HepG2 (cell line): ENCODE measurements at regions of chr6 and their contacts with region 1.

Region 1: GRCh38 chr6:52233975-52234823 is 10.1 kb downstream of the IL17F start:
- DNase-seq: peak; percentile 68
- ATAC-seq: peak; percentile 99
- H3K4me3 ChIP-seq: no peak overlapping the region; a peak in 1 of 6 replicates
- H3K27ac ChIP-seq: no peak overlapping the region
- H3K4me1 ChIP-seq: peaks cover 10% of the 10 kb centered on the region
- H3K27me3 ChIP-seq: peaks cover 0 to 27% of the 10 kb centered on the region in 2 experiments; a peak in 2 of 5 replicates
- CTCF ChIP-seq: peak; percentile 86
- EP300 ChIP-seq: no peak
- POLR2A ChIP-seq: no peak
- RAD21 ChIP-seq: peak; percentile 70; the same call in 1 of the 2 replicates

Region 2: DNA sequence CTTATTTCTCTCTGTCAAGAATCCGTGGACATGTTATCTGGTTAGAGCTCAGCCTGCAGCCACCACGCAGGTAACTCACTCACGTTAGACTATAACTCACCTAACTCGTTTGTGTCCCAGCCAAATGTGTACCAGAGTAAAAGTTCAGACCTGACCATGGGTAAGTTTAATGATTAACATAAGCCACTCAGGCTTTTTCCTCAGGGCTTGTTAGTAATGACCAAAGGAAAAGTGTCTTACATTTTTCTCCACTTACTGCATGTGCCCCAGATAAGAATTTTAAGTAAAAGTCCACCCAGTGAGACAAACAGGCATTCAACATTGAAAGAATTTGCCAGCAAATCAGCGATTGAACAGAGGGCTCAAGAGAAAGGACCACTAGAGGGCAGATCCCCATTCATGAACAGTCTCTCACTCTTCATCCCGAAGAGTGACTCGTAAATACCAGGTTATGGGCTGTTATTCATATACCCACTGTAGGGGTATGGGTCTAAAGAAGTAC is 146.7 kb before region 1 on chr6 and contains the start of gene PKHD1:
- CTCF ChIA-PET with region 1: no interaction called
- POLR2A ChIA-PET with region 1: no interaction called
- in situ Hi-C with region 1: no loop called
- intact Hi-C with region 1: loop called (anchors 2 kb)
- DNase-seq: peak; percentile 55
- ATAC-seq: peak; percentile 96
- H3K4me3 ChIP-seq: peak within 1 kb of the TSS in 1 of 3 experiments; percentile 20; a peak in 1 of 6 replicates
- H3K27ac ChIP-seq: no peak within 1 kb of the TSS
- H3K4me1 ChIP-seq: peaks cover 24% of the 10 kb centered on the region
- H3K27me3 ChIP-seq: no peaks in the 10 kb centered on the region
- CTCF ChIP-seq: peak; percentile 74
- EP300 ChIP-seq: no peak
- POLR2A ChIP-seq: no peak
- RAD21 ChIP-seq: no peak
- total RNA-seq, gene PKHD1: 0.10 and 0.13 TPM in 2 replicates

Region 3: DNA sequence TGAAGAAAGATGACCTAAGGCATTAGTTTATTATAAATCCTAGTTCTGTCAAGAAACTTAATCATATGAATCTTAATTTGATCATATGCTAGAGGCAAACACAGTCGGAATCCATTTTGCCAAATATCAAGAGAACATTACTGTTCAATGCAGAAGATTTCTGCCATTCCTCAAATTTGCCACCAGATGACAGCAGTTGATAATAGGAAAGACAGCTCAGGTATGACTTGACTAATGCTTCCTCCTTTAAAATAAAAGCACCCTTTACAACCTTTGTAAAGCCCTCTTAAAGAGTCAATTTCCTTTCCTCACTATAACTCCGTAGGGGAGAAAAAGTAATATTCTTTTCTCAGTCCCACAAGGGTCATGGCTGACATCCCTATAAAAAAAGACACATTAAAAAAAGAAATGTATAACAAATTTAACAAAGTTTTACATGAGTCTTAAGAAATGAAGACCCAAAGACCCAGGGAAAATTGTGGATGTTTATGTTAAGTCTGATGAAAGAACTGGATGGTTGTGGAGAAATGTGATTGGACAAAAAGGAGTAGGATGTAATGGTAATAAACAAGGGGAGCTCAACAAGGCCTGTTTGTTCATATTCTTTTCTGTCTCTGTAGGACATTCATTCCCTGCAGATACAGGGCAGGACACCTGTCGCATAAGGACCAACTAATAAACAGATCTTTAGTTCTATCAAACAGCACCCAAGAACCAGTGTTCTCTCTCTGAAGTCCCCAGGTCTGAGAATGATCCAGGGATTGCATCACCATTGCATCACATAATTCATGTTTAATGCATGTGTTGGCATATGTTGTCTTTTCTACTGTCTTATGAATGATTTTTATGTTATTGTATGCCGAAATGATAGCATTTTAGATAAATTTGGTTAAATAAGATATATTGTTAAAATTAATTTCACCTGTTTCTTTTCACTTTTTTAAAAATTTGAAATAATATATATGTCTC is 71.0 kb before region 1 on chr6:
- CTCF ChIA-PET with region 1: interaction called, 17 read pairs
- POLR2A ChIA-PET with region 1: no interaction called
- in situ Hi-C with region 1: loop called (anchors 10 kb)
- intact Hi-C with region 1: loop called (anchors 1 kb)
- DNase-seq: peak; percentile 53
- ATAC-seq: peak; percentile 87
- H3K4me3 ChIP-seq: no peak overlapping the region
- H3K27ac ChIP-seq: no peak overlapping the region
- H3K4me1 ChIP-seq: peaks cover 25% of the 10 kb centered on the region
- H3K27me3 ChIP-seq: no peaks in the 10 kb centered on the region
- CTCF ChIP-seq: peak; percentile 85
- EP300 ChIP-seq: no peak
- POLR2A ChIP-seq: no peak
- RAD21 ChIP-seq: peak; percentile 88

Region 4: DNA sequence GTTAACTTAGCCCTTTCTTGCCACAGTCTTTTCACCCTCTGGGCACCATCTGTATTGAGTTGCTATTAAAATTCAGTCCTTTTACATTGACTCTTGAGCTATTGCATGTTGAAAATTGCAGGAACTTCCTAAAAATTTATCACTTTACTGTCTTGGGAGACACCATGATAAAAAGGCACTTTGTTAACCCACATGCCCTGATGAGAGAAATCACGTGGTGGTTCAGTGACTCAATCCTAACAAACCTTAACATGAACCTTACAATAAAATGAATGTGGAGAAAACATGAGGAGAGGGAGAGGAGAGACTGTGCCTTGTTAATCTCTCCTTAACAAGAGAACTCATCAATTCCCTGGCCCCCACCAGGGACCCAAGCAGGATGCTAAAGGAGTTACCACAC is 730.1 kb after region 1 on chr6:
- CTCF ChIA-PET with region 1: no interaction called
- POLR2A ChIA-PET with region 1: no interaction called
- in situ Hi-C with region 1: no loop called
- intact Hi-C with region 1: no loop called
- DNase-seq: no peak
- ATAC-seq: no peak
- H3K4me3 ChIP-seq: no peak overlapping the region
- H3K27ac ChIP-seq: no peak overlapping the region
- H3K4me1 ChIP-seq: peaks cover 21% of the 10 kb centered on the region
- H3K27me3 ChIP-seq: peaks cover 0 to 16% of the 10 kb centered on the region in 2 experiments; a peak in 2 of 5 replicates
- CTCF ChIP-seq: no peak
- EP300 ChIP-seq: no peak
- POLR2A ChIP-seq: no peak
- RAD21 ChIP-seq: no peak